Heart left ventricle (tissue), 16 donors: ENCODE measurements at regions of chr22 and their contacts with region 1.

Region 1: DNA sequence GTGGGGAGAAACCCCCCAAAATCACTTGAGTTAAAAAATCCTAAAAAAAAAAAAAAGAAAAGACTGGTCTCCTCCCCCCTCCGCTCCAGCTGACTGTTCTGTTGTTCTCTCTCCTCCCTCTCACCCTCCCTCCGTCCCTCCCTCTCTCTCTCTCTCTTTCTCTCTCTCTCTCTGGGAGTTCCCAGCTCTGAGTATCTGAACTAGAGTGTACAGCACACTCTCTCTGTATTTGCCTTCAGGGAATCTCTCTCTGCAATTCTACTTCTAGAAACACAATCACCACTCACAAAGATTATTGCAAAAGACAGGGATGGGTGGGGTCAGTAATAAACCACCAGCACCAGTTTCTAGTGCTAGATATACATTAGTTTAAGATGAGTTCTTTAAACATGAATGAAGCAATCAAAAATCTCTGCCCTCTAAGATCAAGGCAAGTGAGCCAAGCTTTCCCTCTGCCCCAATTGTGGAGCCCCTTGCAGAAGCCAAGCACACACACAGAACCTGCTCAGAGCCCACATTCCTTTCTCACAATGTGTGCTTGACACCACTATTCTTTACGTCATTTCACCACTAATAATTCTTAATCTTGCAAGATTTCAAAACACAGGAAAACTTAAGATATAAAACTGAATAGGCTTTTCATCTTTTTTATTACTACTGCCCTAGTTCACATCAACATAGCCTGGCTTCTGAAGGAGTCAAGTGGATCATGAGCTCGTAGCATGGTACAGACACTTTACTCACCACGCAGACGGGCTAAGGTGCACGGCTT is 133.5 kb downstream of the RBFOX2 start:
- DNase-seq: peak in 4 of 5 donors; percentile 48 to 70 (median 54)
- ATAC-seq: peak; percentile 93 to 95 (median 95)
- H3K4me3 ChIP-seq: peak overlapping the region in 11 of 12 donors; percentile 16 to 57 (median 50)
- H3K27ac ChIP-seq: peak overlapping the region; percentile 76 to 95 (median 86)
- H3K4me1 ChIP-seq: peaks cover 3 to 74% (median 40%) of the 10 kb centered on the region in 12 donors
- H3K27me3 ChIP-seq: no peaks in the 10 kb centered on the region
- CTCF ChIP-seq: no peak
- POLR2A ChIP-seq: no peak

Region 2: DNA sequence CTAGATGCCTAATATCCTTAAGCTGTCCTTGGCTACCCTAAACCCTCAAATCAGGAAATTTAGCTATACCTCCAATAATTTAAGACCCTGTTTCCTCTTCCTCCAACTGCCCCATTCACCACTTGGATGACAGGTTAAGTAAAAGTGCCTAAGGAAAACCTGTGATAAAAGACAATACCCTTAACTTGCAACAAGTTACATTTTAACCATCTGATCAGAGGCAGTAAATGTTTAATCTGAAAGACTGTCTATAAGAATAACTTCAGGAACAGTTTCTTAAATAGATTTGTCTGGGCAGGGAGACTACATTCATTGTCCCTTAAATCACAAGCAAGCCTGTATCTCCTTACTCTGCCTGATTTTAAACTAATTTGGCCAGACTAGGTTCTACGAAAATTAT is 48.3 kb before region 1 on chr22:
- intact Hi-C with region 1: loop called in 6 of 10 experiments (anchors 2 to 10 kb)
- DNase-seq: no peak
- ATAC-seq: no peak
- H3K4me3 ChIP-seq: no peak overlapping the region
- H3K27ac ChIP-seq: peak overlapping the region in 1 of 12 donors; percentile 40
- H3K4me1 ChIP-seq: peaks cover 0 to 66% (median 31%) of the 10 kb centered on the region in 12 donors
- H3K27me3 ChIP-seq: no peaks in the 10 kb centered on the region
- CTCF ChIP-seq: no peak
- POLR2A ChIP-seq: no peak